ENCODE measurements at regions of chr14 and their contacts with region 1.

Region 1: GRCh38 chr14:70934502-70935134 is 27.4 kb downstream of the PCNX1 start:
- DNase-seq: no peak
- H3K4me3 Mint-ChIP-seq: peak overlapping the region; percentile 53
- H3K27ac Mint-ChIP-seq: peak overlapping the region; percentile 67
- H3K4me1 Mint-ChIP-seq: peaks cover 62% of the 10 kb centered on the region
- H3K27me3 Mint-ChIP-seq: no peaks in the 10 kb centered on the region

Region 2: DNA sequence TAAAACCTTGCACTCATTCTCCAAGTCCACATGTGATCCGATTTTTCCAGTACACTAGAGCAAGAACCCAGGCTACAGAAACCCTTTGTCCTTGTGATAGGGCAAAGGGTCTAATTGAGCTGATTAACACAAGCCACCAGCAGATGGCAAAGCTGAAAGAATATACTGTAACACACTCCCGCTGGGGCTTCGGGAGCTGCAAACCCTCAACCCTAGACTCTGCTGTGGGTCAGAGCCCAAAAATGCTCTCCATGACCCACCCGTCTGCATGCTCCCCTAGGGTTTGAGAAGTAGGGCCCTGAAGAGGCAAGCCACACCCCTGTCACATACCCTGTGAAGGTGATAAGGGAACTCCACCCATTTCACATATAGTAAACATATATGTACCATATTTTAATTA is 61.0 kb before region 1 on chr14:
- intact Hi-C with region 1: loop called (anchors 2 kb)
- DNase-seq: no peak
- H3K4me3 Mint-ChIP-seq: no peak overlapping the region
- H3K27ac Mint-ChIP-seq: no peak overlapping the region
- H3K4me1 Mint-ChIP-seq: peaks cover 24% of the 10 kb centered on the region
- H3K27me3 Mint-ChIP-seq: no peaks in the 10 kb centered on the region

Region 3: GRCh38 chr14:70919774-70920173 is 14.8 kb before region 1 on chr14:
- intact Hi-C with region 1: loop called (anchors 2 kb)
- DNase-seq: no peak
- H3K4me3 Mint-ChIP-seq: no peak overlapping the region
- H3K27ac Mint-ChIP-seq: no peak overlapping the region
- H3K4me1 Mint-ChIP-seq: peaks cover 77% of the 10 kb centered on the region
- H3K27me3 Mint-ChIP-seq: no peaks in the 10 kb centered on the region

Region 4: GRCh38 chr14:70955543-70956480 is 21.2 kb after region 1 on chr14:
- intact Hi-C with region 1: no loop called
- DNase-seq: peak; percentile 19
- H3K4me3 Mint-ChIP-seq: no peak overlapping the region
- H3K27ac Mint-ChIP-seq: no peak overlapping the region
- H3K4me1 Mint-ChIP-seq: peaks cover 20% of the 10 kb centered on the region
- H3K27me3 Mint-ChIP-seq: no peaks in the 10 kb centered on the region

Region 5: GRCh38 chr14:71166180-71166790 is 231.7 kb after region 1 on chr14:
- intact Hi-C with region 1: no loop called
- DNase-seq: no peak
- H3K4me3 Mint-ChIP-seq: no peak overlapping the region
- H3K27ac Mint-ChIP-seq: no peak overlapping the region
- H3K4me1 Mint-ChIP-seq: peaks cover 20% of the 10 kb centered on the region
- H3K27me3 Mint-ChIP-seq: peaks cover 10% of the 10 kb centered on the region

Measured in activated T-helper 1 cell treated with anti-CD3 and anti-CD28 coated beads, Interleukin-12 subunit alpha, Interleukin-12 subunit beta, Interleukin-2, Interleukin-4 antibody, amounts not matched to agents 30 ng/mL and 10 ng/mL and 1 ng/mL, durations not matched to agents 14 hours and 24 hours and 36 hours (primary cell).